Gastrocnemius medialis (tissue), 4 donors: ENCODE measurements at regions of chr11 and their contacts with region 1.

Region 1: GRCh38 chr11:95680169-95680929 is 109.2 kb downstream of the FAM76B start:
- DNase-seq: no peak
- ATAC-seq: peak; percentile 74 to 77
- H3K4me3 ChIP-seq: no peak overlapping the region
- H3K27ac ChIP-seq: peak overlapping the region in 2 of 4 donors; percentile 1 to 28
- H3K4me1 ChIP-seq: peaks cover 10 to 23% of the 10 kb centered on the region in 2 donors
- H3K27me3 ChIP-seq: no peaks in the 10 kb centered on the region
- CTCF ChIP-seq: no peak
- POLR2A ChIP-seq: no peak

Region 2: GRCh38 chr11:95647355-95647754 is 33.0 kb before region 1 on chr11:
- in situ Hi-C with region 1: no loop called
- intact Hi-C with region 1: loop called (anchors 5 kb)
- DNase-seq: peak; percentile 5 to 26
- ATAC-seq: peak; percentile 77 to 81
- H3K4me3 ChIP-seq: no peak overlapping the region
- H3K27ac ChIP-seq: peak overlapping the region; percentile 5 to 66 (median 46)
- H3K4me1 ChIP-seq: peaks cover 0 to 8% of the 10 kb centered on the region in 2 donors
- H3K27me3 ChIP-seq: no peaks in the 10 kb centered on the region
- CTCF ChIP-seq: no peak
- POLR2A ChIP-seq: no peak